ENCODE measurements at regions of chr1 and their contacts with region 1.

Region 1: DNA sequence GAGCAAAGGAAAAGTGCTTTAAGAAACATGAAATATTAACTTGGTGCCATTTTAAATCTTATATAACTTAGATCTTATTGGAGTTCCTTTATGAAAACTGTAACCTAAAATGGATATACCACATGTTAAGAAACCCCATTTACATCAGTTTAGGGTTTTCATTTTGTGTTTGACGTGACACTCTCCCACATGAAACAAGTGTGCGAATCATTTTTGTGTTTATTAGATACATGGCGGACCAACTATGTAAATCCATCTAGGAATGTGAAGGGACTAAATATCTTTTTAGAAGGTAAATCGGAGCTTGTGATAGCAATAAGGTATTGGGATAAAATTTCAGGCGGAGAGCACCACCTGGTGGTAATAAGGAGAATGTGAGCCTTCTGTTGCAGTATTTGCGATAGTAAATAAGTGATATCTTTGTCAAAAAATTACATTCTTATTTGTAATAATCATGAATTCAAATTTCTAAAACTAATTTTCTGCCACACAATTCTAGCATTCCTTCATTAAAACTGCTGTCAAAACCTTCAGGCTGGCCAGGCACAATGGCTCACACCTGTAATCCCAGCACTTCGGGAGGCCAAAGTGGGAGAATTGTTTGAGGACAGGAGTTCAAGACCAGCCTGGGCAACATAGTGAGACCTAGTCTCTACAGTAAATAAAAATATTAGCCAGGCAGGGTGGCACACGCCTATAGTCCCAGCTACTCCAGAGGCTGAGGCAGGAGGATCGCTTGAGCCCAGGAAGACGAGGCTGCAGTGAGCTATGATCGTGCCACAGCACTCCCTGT is 31.3 kb downstream of the SMAP2 start:
- DNase-seq: no peak
- H3K4me3 ChIP-seq: no peak overlapping the region
- H3K27ac ChIP-seq: no peak overlapping the region
- H3K27me3 ChIP-seq: no peaks in the 10 kb centered on the region
- CTCF ChIP-seq: peak; percentile 77

Region 2: DNA sequence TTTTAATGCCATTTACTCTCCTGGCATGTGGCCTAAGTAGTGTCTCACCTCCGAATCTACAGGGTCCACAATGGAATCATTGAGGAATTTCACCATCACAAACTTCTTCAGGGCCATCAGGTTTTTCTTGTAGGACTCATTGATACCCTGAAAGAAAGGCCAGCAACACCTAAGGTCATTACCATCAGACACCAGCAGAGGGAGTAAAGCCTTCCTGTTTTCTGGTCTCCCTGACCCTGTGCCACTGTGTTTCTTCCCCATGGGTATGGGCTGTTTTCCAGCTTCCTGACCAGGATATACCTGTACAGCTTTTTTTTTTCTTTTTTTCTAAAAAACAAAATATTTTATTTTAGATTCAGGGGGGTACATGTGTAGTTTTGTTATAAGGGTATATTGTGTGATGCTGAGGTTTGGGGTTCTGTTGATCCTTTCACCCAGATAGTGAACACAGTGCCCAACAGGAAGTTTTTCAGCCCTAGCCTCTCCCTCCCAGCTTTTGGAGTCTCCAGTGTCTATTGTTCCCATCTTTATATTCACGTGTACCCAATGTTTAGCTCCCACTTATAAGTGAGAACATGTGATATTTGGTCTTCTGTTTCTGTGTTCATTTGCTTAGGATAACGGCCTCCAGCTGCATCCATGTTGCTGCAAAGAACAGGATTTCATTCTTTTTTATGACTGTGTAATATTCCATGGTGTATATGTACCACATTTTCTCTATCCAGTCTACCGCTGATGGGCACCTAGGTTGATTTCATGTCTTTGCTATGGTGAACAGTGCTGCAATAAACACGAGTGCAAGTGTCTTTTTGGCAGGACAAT is 326.1 kb before region 1 on chr1:
- CTCF ChIA-PET with region 1: interaction called, 11 read pairs
- POLR2A ChIA-PET with region 1: no interaction called
- DNase-seq: peak; percentile 13
- H3K4me3 ChIP-seq: no peak overlapping the region
- H3K27ac ChIP-seq: no peak overlapping the region
- H3K27me3 ChIP-seq: no peaks in the 10 kb centered on the region
- CTCF ChIP-seq: peak; percentile 82

Region 3: DNA sequence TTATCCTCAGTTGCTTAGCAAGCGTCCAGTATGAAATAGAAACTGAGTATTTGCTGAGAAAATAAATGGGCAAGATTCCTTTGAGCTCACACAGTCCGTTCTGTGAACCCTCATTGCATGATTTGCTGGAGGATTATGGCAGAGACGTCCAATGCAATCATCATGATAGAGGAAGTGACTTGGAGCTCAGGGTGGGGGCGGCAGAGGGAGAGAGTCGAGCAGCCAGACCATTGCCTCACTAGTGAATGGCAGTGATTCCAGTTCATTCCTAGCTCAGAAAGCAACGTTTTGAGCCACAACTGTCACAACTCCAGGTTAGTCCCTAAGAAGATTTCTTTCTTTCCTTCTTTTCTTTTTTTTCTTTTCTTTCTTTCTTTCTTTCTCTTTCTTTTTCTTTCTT is 60.3 kb before region 1 on chr1:
- CTCF ChIA-PET with region 1: interaction called, 28 read pairs
- POLR2A ChIA-PET with region 1: no interaction called
- DNase-seq: peak; percentile 23
- H3K4me3 ChIP-seq: no peak overlapping the region
- H3K27ac ChIP-seq: no peak overlapping the region
- H3K27me3 ChIP-seq: no peaks in the 10 kb centered on the region
- CTCF ChIP-seq: no peak

Region 4: GRCh38 chr1:40392221-40392620 is 12.6 kb before region 1 on chr1:
- CTCF ChIA-PET with region 1: interaction called, 20 read pairs
- POLR2A ChIA-PET with region 1: no interaction called
- DNase-seq: no peak
- H3K4me3 ChIP-seq: no peak overlapping the region
- H3K27ac ChIP-seq: no peak overlapping the region
- H3K27me3 ChIP-seq: no peaks in the 10 kb centered on the region
- CTCF ChIP-seq: no peak

Region 5: GRCh38 chr1:40421431-40422384 is 16.8 kb after region 1 on chr1:
- CTCF ChIA-PET with region 1: interaction called, 11 read pairs
- POLR2A ChIA-PET with region 1: no interaction called
- DNase-seq: no peak
- H3K4me3 ChIP-seq: no peak overlapping the region
- H3K27ac ChIP-seq: no peak overlapping the region
- H3K27me3 ChIP-seq: no peaks in the 10 kb centered on the region
- CTCF ChIP-seq: no peak